Caco-2 (cell line): ENCODE measurements at regions of chrX and their contacts with region 1.

Region 1: DNA sequence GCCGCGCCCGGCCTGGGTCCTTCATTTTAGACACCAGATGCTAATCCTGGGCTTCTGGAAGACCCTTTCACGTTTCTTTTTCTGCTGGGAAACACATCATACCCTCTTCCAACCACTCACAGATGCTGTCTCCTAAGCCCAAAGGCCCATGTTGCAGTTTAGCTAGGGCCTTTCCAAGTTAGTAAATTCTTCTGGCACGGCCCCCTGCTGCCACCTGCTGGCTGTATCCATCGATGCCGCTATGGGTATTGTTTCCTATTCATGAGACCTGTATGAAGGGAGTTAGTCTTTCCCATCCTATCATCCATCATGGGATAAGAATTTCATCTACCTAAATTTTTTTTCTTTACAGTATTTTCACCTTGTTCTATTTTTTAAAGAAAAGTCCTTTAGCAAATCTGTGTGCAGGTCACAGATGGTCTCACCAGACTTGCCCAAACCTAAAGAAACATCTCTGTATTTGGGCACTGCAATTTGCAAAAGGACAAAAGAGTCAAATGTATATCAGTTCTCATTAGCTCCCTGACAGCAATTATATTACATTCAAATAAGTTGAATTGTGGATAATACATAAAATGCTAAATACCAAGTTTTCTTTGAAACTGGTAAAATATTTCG is 37.8 kb upstream of the SLC9A7 start:
- DNase-seq: peak; percentile 74 to 80
- H3K4me3 ChIP-seq: no peak overlapping the region
- H3K4me3 Mint-ChIP-seq: no peak overlapping the region
- H3K27ac Mint-ChIP-seq: no peak overlapping the region
- H3K4me1 ChIP-seq: peaks cover 10% of the 10 kb centered on the region; the same call in 1 of the 2 replicates
- H3K4me1 Mint-ChIP-seq: peaks cover 21% of the 10 kb centered on the region
- H3K27me3 ChIP-seq: no peaks in the 10 kb centered on the region
- H3K27me3 Mint-ChIP-seq: no peaks in the 10 kb centered on the region
- CTCF ChIP-seq: peak; percentile 49 to 69

Region 2: GRCh38 chrX:46653482-46653881 is 143.2 kb before region 1 on chrX:
- CTCF ChIA-PET with region 1: no interaction called
- POLR2A ChIA-PET with region 1: no interaction called
- intact Hi-C with region 1: loop called (anchors 1 kb)
- DNase-seq: peak; percentile 39 to 45
- H3K4me3 ChIP-seq: no peak overlapping the region
- H3K4me3 Mint-ChIP-seq: no peak overlapping the region
- H3K27ac Mint-ChIP-seq: no peak overlapping the region
- H3K4me1 ChIP-seq: no peaks in the 10 kb centered on the region
- H3K4me1 Mint-ChIP-seq: no peaks in the 10 kb centered on the region
- H3K27me3 ChIP-seq: no peaks in the 10 kb centered on the region
- H3K27me3 Mint-ChIP-seq: no peaks in the 10 kb centered on the region
- CTCF ChIP-seq: peak in 1 of 2 experiments; percentile 45

Region 3: DNA sequence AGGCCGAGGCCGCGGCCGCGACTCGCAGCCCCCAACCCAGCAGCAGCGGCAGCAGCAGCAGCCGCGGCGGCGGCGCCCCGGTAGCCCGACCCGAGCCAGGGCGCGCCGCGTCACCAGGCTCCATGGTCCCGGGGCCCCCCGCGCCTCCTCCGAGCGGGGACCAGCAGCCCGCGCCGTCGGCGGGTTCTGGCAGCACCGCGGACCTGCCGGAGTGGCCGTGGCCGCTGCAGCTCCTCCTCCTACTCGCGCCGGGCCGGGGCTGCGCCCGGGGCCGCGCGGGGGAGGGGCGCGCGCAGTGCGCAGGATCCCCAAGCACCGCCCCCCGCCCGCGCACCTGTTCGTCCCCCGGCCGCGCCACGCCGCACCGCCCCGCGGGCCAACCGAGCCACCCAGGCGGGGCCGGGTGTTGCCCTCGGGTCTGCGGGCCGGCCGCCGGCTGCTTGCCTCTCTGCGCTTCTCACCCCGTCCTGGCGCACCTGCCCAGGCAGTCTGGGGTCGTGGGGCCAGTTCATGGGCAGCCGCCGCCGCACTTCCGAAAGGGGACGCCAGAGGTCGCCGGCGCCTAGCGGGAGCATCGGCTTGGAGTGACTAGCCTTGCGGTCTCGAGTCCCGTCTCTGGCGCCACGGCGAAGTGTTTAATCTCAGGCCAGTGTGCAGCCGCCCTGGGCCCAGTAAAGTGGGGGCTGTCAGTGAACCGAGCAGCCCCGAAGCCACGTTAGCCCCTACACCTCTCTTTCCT is 37.6 kb before region 1 on chrX and contains the start of gene SLC9A7:
- CTCF ChIA-PET with region 1: interaction called, 15 read pairs
- POLR2A ChIA-PET with region 1: no interaction called
- intact Hi-C with region 1: loop called (anchors 1 kb)
- DNase-seq: peak; percentile 82 to 90
- H3K4me3 ChIP-seq: peak within 1 kb of the TSS; percentile 83
- H3K4me3 Mint-ChIP-seq: peak within 1 kb of the TSS; percentile 85
- H3K27ac Mint-ChIP-seq: peak within 1 kb of the TSS; percentile 83
- H3K4me1 ChIP-seq: peaks cover 9% of the 10 kb centered on the region; the same call in 1 of the 2 replicates
- H3K4me1 Mint-ChIP-seq: no peaks in the 10 kb centered on the region
- H3K27me3 ChIP-seq: no peaks in the 10 kb centered on the region
- H3K27me3 Mint-ChIP-seq: no peaks in the 10 kb centered on the region
- CTCF ChIP-seq: peak; percentile 69 to 80
- total RNA-seq, gene SLC9A7: 20.1 and 21.3 TPM in 2 replicates

Region 4: DNA sequence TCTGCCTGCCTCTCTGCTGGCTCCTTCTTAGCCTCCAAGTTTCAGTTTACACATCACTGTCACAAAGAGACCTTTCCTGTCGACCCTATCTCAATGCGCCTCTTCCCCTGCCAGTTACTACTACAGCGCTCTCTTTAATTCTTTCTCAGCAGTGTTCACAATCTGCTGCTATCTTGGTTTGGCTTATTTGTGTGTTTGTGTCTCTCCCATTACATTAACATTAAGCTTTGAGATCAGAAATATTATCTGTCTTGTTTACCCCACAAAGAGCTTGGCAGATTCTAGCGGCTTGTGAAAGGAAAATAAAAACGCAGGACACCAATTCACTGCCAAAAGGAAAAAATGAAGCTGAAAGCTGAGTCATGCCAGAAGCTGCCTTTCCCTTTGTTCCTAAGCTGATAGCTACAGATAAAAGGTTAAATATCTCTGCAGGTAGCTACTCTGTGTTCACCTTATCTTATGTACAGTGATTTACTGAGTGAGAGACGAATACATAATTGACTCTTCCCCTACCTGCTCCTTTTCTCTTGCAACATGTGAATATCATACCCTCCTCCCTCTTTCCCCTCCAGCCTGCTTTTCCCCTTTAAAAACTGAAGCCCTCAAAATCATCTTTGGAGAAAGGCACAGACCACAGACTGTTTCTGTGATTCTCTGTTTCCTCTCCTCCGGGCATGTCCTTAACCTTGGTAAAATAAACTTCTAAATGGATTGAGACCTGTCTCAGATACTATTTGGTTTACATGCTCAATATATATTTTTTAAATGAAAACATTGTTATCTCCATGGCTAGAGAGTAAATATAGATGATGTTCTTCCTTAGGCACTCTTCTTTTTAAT is 18.5 kb before region 1 on chrX:
- CTCF ChIA-PET with region 1: interaction called, 6 read pairs
- POLR2A ChIA-PET with region 1: no interaction called
- intact Hi-C with region 1: loop called (anchors 2 kb)
- DNase-seq: peak; percentile 55 to 65
- H3K4me3 ChIP-seq: no peak overlapping the region
- H3K4me3 Mint-ChIP-seq: peak overlapping the region; percentile 47
- H3K27ac Mint-ChIP-seq: peak overlapping the region; percentile 74
- H3K4me1 ChIP-seq: peaks cover 26% of the 10 kb centered on the region
- H3K4me1 Mint-ChIP-seq: peaks cover 12% of the 10 kb centered on the region
- H3K27me3 ChIP-seq: no peaks in the 10 kb centered on the region
- H3K27me3 Mint-ChIP-seq: no peaks in the 10 kb centered on the region
- CTCF ChIP-seq: no peak